ENCODE measurements at regions of chr5 and their contacts with region 1.

Region 1: GRCh38 chr5:120655828-120656435 is 191.8 kb downstream of the PRR16 start:
- DNase-seq: peak; percentile 37
- ATAC-seq: no peak
- H3K4me3 Mint-ChIP-seq: no peak overlapping the region
- H3K27ac Mint-ChIP-seq: no peak overlapping the region
- H3K4me1 Mint-ChIP-seq: no peaks in the 10 kb centered on the region
- H3K27me3 Mint-ChIP-seq: no peaks in the 10 kb centered on the region

Region 2: GRCh38 chr5:120624021-120624563 is 31.8 kb before region 1 on chr5:
- CTCF ChIA-PET with region 1: no interaction called
- POLR2A ChIA-PET with region 1: no interaction called
- intact Hi-C with region 1: no loop called
- DNase-seq: no peak
- ATAC-seq: no peak
- H3K4me3 Mint-ChIP-seq: no peak overlapping the region
- H3K27ac Mint-ChIP-seq: no peak overlapping the region
- H3K4me1 Mint-ChIP-seq: no peaks in the 10 kb centered on the region
- H3K27me3 Mint-ChIP-seq: no peaks in the 10 kb centered on the region

Region 3: GRCh38 chr5:121053055-121053985 is 397.4 kb after region 1 on chr5:
- CTCF ChIA-PET with region 1: no interaction called
- POLR2A ChIA-PET with region 1: no interaction called
- intact Hi-C with region 1: no loop called
- DNase-seq: no peak
- ATAC-seq: no peak
- H3K4me3 Mint-ChIP-seq: no peak overlapping the region
- H3K27ac Mint-ChIP-seq: no peak overlapping the region
- H3K4me1 Mint-ChIP-seq: no peaks in the 10 kb centered on the region
- H3K27me3 Mint-ChIP-seq: no peaks in the 10 kb centered on the region

Region 4: DNA sequence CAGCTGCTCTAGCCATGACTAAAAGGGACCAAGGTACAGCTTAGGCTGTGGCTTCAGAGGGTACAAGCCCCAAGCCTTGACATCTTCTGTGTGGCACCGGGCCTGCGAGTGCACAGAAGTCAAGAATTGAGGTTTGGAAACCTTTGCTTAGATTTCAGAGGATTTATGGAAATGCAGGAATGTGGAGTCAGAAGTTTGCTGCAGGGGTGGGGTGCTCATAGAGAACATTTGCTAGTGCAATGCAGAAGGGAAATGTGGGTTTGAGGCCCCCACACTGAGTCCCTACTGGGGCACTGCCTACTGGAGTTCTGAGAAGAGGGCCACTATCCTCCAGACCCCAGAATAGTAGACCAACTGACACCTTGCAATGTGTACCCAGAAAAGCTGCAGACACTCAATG is 570.8 kb after region 1 on chr5:
- CTCF ChIA-PET with region 1: no interaction called
- POLR2A ChIA-PET with region 1: no interaction called
- intact Hi-C with region 1: no loop called
- DNase-seq: no peak
- ATAC-seq: no peak
- H3K4me3 Mint-ChIP-seq: no peak overlapping the region
- H3K27ac Mint-ChIP-seq: no peak overlapping the region
- H3K4me1 Mint-ChIP-seq: no peaks in the 10 kb centered on the region
- H3K27me3 Mint-ChIP-seq: no peaks in the 10 kb centered on the region

Region 5: DNA sequence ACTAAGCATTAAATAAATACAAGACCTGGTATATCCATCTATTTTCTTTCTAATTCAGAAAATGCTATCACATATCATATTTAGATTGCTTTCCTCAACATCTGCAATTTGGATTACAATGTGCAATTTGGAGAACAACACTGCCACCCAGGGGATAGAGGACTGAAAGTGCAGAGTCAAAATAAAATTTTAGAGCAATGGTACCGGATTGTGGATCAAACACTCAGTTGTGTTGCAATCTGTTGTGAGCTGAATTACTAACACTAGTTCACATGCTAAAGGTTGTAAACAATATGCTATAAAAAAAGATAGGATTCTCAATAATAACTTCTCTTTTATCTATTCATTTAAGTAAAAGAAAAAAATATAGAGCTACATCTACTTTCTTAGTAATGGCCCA is 1293.9 kb after region 1 on chr5:
- CTCF ChIA-PET with region 1: no interaction called
- POLR2A ChIA-PET with region 1: no interaction called
- intact Hi-C with region 1: loop called in 1 of 2 experiments (anchors 2 kb)
- DNase-seq: peak; percentile 35
- ATAC-seq: no peak
- H3K4me3 Mint-ChIP-seq: no peak overlapping the region
- H3K27ac Mint-ChIP-seq: no peak overlapping the region
- H3K4me1 Mint-ChIP-seq: no peaks in the 10 kb centered on the region
- H3K27me3 Mint-ChIP-seq: peaks cover 9% of the 10 kb centered on the region

Region 6: DNA sequence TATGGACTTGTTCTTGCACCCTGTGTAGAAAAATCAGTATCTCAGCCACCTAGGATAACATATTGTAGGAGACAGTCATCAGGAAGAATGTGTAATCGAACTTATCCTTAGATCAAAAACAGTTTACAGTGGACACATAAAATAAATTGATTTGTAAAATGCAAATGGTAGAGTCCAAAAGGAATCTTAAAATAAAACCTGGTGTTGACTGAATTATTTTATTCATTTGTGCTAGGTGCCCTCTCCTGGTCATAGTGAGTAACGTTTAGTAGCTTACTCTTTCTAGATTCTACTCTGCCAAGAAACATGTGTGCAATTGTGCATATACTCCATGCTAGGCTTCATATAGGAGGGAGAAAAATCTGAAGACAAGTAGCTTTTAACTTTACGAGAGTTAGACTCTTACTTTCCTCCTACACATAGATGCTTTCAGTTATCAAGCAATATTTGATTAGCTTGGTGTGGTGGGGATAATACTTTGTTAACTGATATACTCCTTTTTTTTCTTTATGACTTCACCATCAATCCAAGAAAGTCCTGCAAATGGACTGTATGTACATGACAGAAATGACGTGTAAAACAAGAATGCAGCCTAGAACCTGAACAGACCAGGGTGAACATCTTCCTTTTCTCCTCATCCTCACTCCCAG is 1445.8 kb after region 1 on chr5:
- CTCF ChIA-PET with region 1: no interaction called
- POLR2A ChIA-PET with region 1: no interaction called
- intact Hi-C with region 1: loop called in 1 of 2 experiments (anchors 10 kb)
- DNase-seq: no peak
- ATAC-seq: no peak
- H3K4me3 Mint-ChIP-seq: no peak overlapping the region
- H3K27ac Mint-ChIP-seq: no peak overlapping the region
- H3K4me1 Mint-ChIP-seq: no peaks in the 10 kb centered on the region
- H3K27me3 Mint-ChIP-seq: peaks cover 2% of the 10 kb centered on the region

Measured in activated CD4-positive, alpha-beta T cell treated with anti-CD3 and anti-CD28 coated beads for 36 hours (primary cell).